Activated B cell treated with CpG ODN at 0.5 μM for 24 hours (primary cell): ENCODE measurements at regions of chr11 and their contacts with region 1.

Region 1: DNA sequence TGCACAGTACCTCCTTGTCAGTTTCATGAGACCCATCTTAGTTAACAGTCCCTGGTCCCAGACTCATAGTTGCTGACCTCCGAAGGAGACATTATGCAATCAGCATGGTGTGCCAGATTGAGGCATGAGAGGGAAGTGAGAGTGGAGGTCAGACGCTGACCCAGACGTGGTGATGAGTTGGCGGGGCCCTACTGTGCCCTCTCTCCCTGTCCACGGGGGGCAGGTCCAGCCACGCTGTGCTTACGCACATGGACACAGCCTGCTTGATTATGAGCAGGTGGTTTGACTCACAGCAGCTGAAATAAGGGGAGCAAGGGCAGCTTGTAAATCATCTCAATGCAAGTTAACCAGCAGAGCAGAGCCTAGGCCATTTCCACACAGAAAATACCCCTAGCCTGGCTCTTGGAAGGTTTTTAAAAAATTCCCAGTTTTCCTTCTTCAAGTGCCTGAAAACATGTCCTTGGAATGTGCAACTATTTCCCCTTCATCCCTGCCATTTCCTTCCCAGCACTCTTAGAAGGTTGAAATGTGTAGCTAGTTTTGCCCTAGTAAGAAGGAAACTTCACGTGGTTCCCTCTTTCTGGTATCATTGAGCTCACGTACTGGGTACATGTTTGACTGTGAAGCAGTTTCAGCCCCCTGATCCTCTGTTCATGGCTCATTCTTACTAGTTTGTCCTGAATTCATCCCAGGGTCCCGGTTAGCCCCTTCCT is 122.6 kb upstream of the SORL1-AS1 start:
- DNase-seq: no peak
- ATAC-seq: peak; percentile 78
- H3K4me3 Mint-ChIP-seq: peak overlapping the region; percentile 50
- H3K27ac Mint-ChIP-seq: peak overlapping the region; percentile 87
- H3K4me1 Mint-ChIP-seq: peaks cover 42% of the 10 kb centered on the region
- H3K27me3 Mint-ChIP-seq: peaks cover 4% of the 10 kb centered on the region
- CTCF ChIP-seq: no peak

Region 2: DNA sequence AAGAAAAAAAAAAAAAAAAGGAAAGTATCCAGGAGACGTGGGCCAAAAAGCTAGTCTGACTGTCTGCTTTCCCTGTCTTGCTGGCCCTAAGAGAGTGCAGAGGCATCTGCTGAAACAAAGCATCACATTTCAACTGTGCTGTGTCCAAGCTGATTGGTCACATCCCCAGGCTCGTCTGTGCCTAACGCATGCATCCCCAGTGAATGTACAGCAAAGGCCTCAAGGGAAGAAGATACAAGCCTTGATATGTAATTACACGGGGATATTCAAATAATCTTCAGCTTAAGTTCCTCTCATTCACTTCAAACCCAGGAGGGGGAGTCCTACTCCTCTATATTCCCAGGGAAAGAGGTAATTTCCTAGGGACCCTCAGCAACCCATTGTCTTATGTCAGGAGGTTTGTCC is 128.7 kb before region 1 on chr11:
- CTCF ChIA-PET with region 1: interaction called, 3 read pairs
- POLR2A ChIA-PET with region 1: interaction called, 15 read pairs
- intact Hi-C with region 1: no loop called
- DNase-seq: no peak
- ATAC-seq: peak; percentile 49
- H3K4me3 Mint-ChIP-seq: peak overlapping the region; percentile 66
- H3K27ac Mint-ChIP-seq: peak overlapping the region; percentile 80
- H3K4me1 Mint-ChIP-seq: peaks cover 76% of the 10 kb centered on the region
- H3K27me3 Mint-ChIP-seq: no peaks in the 10 kb centered on the region
- CTCF ChIP-seq: no peak

Region 3: GRCh38 chr11:121540627-121541026 is 34.8 kb before region 1 on chr11:
- CTCF ChIA-PET with region 1: interaction called, 3 read pairs
- POLR2A ChIA-PET with region 1: no interaction called
- intact Hi-C with region 1: loop called (anchors 5 kb)
- DNase-seq: no peak
- ATAC-seq: no peak
- H3K4me3 Mint-ChIP-seq: no peak overlapping the region
- H3K27ac Mint-ChIP-seq: no peak overlapping the region
- H3K4me1 Mint-ChIP-seq: peaks cover 48% of the 10 kb centered on the region
- H3K27me3 Mint-ChIP-seq: no peaks in the 10 kb centered on the region
- CTCF ChIP-seq: no peak

Region 4: GRCh38 chr11:121688055-121688491 is 112.7 kb after region 1 on chr11:
- CTCF ChIA-PET with region 1: no interaction called
- POLR2A ChIA-PET with region 1: no interaction called
- intact Hi-C with region 1: no loop called
- DNase-seq: no peak
- ATAC-seq: no peak
- H3K4me3 Mint-ChIP-seq: no peak overlapping the region
- H3K27ac Mint-ChIP-seq: no peak overlapping the region
- H3K4me1 Mint-ChIP-seq: no peaks in the 10 kb centered on the region
- H3K27me3 Mint-ChIP-seq: peaks cover 20% of the 10 kb centered on the region
- CTCF ChIP-seq: no peak